Activated naive CD4-positive, alpha-beta T cell treated with anti-CD3 and anti-CD28 coated beads for 36 hours (primary cell): ENCODE measurements at regions of chr4 and their contacts with region 1.

Region 1: GRCh38 chr4:122666527-122667245 is 45.8 kb upstream of the IL21 start:
- DNase-seq: peak; percentile 34
- H3K4me3 Mint-ChIP-seq: peak overlapping the region; percentile 45
- H3K27ac Mint-ChIP-seq: peak overlapping the region; percentile 96
- H3K4me1 Mint-ChIP-seq: peaks cover 82% of the 10 kb centered on the region
- H3K27me3 Mint-ChIP-seq: no peaks in the 10 kb centered on the region

Region 2: DNA sequence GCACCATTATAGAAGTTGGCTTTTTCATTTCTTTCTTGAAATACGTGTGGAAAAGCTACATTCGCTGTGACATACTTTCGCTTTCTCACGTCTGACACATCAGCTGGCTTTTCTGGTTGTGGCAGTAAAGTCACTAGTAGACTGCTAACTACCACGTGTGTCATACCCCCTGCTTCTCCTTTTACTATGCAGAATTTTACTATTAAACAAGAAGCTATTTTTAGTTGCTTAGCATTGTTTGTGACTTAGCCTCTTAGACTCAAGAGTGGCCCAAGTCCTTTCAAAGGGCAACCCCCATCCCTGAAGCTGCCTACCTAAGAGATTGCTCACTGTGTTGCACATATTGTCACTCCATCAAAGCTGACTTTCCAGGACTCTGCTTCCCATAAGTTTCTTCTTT is 208.1 kb before region 1 on chr4:
- CTCF ChIA-PET with region 1: no interaction called
- intact Hi-C with region 1: loop called (anchors 2 kb)
- DNase-seq: peak; percentile 82
- H3K4me3 Mint-ChIP-seq: peak overlapping the region; percentile 68
- H3K27ac Mint-ChIP-seq: peak overlapping the region; percentile 99
- H3K4me1 Mint-ChIP-seq: peaks cover 43% of the 10 kb centered on the region
- H3K27me3 Mint-ChIP-seq: no peaks in the 10 kb centered on the region

Region 3: DNA sequence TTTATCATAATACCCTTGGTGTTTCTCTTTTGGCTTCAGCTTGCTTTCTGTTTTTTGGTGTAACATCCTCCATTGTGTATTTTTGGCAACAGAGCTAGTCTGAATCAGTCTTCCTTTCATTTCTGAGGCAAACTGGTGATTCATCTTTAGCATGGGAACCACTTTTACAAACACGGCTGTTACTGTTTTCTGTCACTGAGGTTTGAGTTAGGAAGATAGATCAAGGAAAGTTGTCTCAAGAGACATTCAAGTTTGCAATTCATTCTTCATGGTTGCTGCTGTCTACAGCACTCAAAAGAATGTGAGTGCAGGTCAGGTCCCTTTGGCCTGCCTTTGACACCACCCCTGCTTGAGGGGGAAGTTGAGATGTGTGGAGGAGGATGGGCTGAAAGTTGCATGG is 82.2 kb before region 1 on chr4:
- CTCF ChIA-PET with region 1: no interaction called
- intact Hi-C with region 1: loop called (anchors 1 kb)
- DNase-seq: peak; percentile 42
- H3K4me3 Mint-ChIP-seq: peak overlapping the region; percentile 50
- H3K27ac Mint-ChIP-seq: peak overlapping the region; percentile 100
- H3K4me1 Mint-ChIP-seq: peaks cover 65% of the 10 kb centered on the region
- H3K27me3 Mint-ChIP-seq: no peaks in the 10 kb centered on the region

Region 4: GRCh38 chr4:122689972-122690371 is 23.3 kb after region 1 on chr4:
- CTCF ChIA-PET with region 1: interaction called, 4 read pairs
- intact Hi-C with region 1: loop called (anchors 2 kb)
- DNase-seq: no peak
- H3K4me3 Mint-ChIP-seq: no peak overlapping the region
- H3K27ac Mint-ChIP-seq: no peak overlapping the region
- H3K4me1 Mint-ChIP-seq: peaks cover 53% of the 10 kb centered on the region
- H3K27me3 Mint-ChIP-seq: peaks cover 2% of the 10 kb centered on the region

Region 5: DNA sequence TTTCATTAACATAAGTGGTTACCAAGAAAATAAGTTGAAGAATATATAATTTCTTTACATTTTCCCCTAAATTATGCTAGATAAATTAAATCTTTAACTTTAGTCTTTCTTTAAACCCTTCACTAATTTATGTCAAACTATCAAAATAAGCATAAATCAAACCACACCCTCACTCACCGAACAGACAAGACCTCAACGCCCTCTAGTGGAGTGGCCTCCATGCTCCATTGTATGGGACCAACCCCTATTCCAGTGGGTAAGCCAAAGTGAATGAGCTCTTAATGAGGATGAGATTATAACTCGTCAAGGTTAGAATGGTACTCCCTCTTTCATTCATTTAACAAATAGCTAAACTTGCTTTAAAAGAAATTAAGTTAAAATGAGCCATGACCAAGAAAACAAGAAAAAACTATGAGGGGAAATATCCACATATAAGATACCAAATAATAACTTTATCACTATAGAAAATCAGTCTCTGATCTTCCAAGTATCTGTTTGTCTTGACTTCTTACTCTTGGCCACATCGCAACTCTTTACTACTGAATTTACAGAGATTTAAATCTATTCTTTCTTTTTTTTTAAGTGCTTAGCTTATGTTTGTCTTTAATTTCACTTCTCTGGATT is 50.3 kb after region 1 on chr4:
- CTCF ChIA-PET with region 1: interaction called, 22 read pairs
- intact Hi-C with region 1: loop called (anchors 1 kb)
- DNase-seq: peak; percentile 94
- H3K4me3 Mint-ChIP-seq: no peak overlapping the region
- H3K27ac Mint-ChIP-seq: peak overlapping the region; percentile 65
- H3K4me1 Mint-ChIP-seq: peaks cover 41% of the 10 kb centered on the region
- H3K27me3 Mint-ChIP-seq: no peaks in the 10 kb centered on the region

Region 6: GRCh38 chr4:122842984-122843531 is 176.4 kb after region 1 on chr4:
- CTCF ChIA-PET with region 1: no interaction called
- intact Hi-C with region 1: no loop called
- DNase-seq: no peak
- H3K4me3 Mint-ChIP-seq: no peak overlapping the region
- H3K27ac Mint-ChIP-seq: no peak overlapping the region
- H3K4me1 Mint-ChIP-seq: no peaks in the 10 kb centered on the region
- H3K27me3 Mint-ChIP-seq: peaks cover 5% of the 10 kb centered on the region

Region 7: DNA sequence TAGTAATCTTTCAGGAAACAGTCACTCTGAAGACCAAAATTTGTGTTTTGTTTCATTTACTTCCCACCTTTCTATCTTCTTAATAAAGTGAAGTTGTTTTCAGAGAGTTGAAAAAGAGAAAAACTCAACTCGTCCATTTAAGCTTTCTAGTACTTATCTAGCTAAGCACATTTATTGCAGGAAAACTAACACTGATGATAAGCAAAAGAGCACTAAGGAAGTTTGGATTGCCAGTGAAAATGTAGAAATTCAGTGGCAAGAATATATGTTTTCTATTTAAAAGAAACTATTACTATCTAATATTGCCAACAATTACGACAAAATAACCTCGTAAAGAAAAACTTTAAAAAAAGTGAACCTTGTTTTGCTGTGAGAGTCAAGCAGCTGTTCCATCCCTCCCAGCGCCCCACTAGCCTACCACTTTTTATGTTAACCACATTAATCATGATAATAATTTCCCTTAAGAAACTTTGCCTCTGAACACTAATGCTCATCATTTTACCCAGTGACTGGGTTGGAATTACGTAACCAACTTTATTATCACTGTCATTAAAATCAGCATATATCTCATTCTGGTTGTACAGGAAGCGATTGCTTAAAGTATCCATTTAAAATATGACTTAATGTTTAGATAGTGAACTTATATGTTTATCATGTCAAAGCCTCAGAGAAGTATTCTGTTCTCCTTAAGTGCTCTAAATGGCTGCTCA is 754.7 kb after region 1 on chr4:
- CTCF ChIA-PET with region 1: no interaction called
- intact Hi-C with region 1: loop called (anchors 5 kb)
- DNase-seq: no peak
- H3K4me3 Mint-ChIP-seq: peak overlapping the region; percentile 9
- H3K27ac Mint-ChIP-seq: peak overlapping the region; percentile 91
- H3K4me1 Mint-ChIP-seq: peaks cover 39% of the 10 kb centered on the region
- H3K27me3 Mint-ChIP-seq: no peaks in the 10 kb centered on the region